Naive thymus-derived CD4-positive, alpha-beta T cell (primary cell): ENCODE measurements at regions of chr12 and their contacts with region 1.

Region 1: GRCh38 chr12:38316391-38317129 is at the start of gene ALG10B:
- DNase-seq: peak; percentile 86 to 96 (median 94)
- ATAC-seq: peak; percentile 99
- H3K4me3 ChIP-seq: peak within 1 kb of the TSS; percentile 95
- H3K4me3 Mint-ChIP-seq: peak within 1 kb of the TSS; percentile 92 to 98 (median 94)
- H3K27ac ChIP-seq: peak within 1 kb of the TSS; percentile 75
- H3K27ac Mint-ChIP-seq: peak within 1 kb of the TSS; percentile 96 to 99 (median 97)
- H3K4me1 ChIP-seq: peaks cover 0 to 13% of the 10 kb centered on the region in 2 donors
- H3K4me1 Mint-ChIP-seq: peaks cover 5 to 44% (median 35%) of the 10 kb centered on the region in 7 donors
- H3K27me3 ChIP-seq: no peaks in the 10 kb centered on the region
- H3K27me3 Mint-ChIP-seq: peaks cover 0 to 9% (median 0%) of the 10 kb centered on the region in 5 donors
- total RNA-seq, gene ALG10B: 10.5 to 17.1 (median 12.0) TPM

Region 2: DNA sequence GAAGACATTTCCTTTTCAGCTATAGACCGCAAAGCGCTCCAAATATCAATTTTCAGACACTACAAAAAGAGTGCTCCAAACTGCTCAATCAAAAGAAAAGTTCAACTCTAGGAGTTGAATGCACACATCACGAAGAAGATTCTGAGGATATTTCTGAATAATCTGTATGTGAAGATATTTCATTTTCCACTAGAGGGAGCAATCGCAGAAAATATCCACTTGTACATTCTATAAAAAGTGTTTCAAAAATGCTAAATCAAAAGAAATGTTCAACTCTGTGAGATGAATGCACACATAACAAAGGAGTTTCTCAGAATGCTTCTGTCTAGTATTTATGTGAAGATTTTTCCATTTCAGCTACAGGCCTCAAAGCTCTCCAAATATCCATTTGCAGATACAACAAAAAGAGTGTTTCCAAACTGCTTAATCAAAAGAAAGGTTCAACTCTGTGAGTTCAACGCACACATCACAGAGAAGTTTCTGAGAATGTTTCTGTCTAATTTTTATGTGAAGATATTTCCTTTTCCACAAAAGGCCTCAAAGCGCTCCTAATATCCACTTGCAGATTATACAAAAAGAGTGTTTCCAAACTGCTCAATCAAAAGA is 643.8 kb before region 1 on chr12:
- CTCF ChIA-PET with region 1: no interaction called
- POLR2A ChIA-PET with region 1: no interaction called
- intact Hi-C with region 1: loop called in 1 of 2 experiments (anchors 2 kb)
- DNase-seq: no peak
- ATAC-seq: no peak
- H3K4me3 ChIP-seq: no peak overlapping the region
- H3K4me3 Mint-ChIP-seq: no peak overlapping the region
- H3K27ac ChIP-seq: no peak overlapping the region
- H3K27ac Mint-ChIP-seq: no peak overlapping the region
- H3K4me1 ChIP-seq: no peaks in the 10 kb centered on the region
- H3K4me1 Mint-ChIP-seq: no peaks in the 10 kb centered on the region
- H3K27me3 ChIP-seq: no peaks in the 10 kb centered on the region
- H3K27me3 Mint-ChIP-seq: no peaks in the 10 kb centered on the region

Region 3: DNA sequence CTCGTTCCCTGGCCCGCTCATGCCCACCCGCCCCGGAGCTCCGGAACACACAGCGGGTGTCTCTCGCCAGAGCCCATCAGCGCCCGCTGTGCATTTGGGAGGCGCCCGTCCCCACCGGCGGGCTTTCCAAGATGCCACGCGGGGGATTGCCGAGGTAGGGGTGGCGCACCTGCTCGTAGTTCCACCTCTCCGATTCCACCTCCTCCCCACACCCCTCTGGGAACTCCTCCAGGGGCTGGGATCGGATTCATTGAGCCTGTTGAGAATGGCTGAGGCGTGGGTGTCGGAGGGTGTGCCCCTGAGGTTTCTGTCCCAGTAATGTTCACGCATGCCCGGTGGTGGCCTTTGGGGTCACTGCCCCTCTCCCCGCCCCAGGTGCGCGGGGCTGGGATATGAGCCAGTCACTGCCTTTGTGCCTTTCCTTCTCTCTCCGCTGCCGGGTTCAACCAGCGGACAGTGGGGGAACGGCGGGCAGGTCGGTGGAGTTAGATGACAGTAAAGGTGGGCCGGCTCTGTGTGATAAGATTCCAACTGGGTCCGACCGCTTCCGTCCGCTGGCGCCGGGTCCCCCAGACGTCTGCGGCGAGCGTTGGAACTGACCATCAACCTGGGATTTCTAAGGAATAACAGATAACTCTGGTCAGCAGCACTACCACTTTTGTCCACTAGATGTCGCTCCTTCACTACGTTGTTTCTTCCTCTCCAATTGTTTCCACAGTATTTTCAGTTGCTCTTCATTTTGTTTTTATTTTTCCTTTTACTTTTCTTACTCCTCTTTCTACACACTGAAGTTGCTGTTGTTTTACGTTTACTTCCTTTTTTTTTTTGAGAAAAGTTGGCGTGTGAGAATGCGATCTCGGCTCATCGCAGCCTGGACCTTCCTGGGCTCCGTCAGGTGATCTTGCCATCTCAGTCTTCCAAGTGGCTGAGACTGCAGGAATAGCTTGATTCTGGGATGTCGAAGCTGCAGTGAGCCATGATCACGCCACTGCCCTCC is 178.0 kb before region 1 on chr12:
- CTCF ChIA-PET with region 1: interaction called, 3 read pairs
- POLR2A ChIA-PET with region 1: no interaction called
- intact Hi-C with region 1: loop called (anchors 1 kb)
- DNase-seq: peak in 8 of 9 donors; percentile 26 to 65 (median 54)
- ATAC-seq: peak; percentile 74
- H3K4me3 ChIP-seq: peak overlapping the region; percentile 31
- H3K4me3 Mint-ChIP-seq: peak overlapping the region; percentile 45 to 89 (median 80)
- H3K27ac ChIP-seq: no peak overlapping the region
- H3K27ac Mint-ChIP-seq: peak overlapping the region in 4 of 9 donors; percentile 33 to 71 (median 53)
- H3K4me1 ChIP-seq: peaks cover 0 to 3% of the 10 kb centered on the region in 2 donors
- H3K4me1 Mint-ChIP-seq: peaks cover 0 to 13% (median 9%) of the 10 kb centered on the region in 7 donors
- H3K27me3 ChIP-seq: no peaks in the 10 kb centered on the region
- H3K27me3 Mint-ChIP-seq: peaks cover 0 to 29% (median 18%) of the 10 kb centered on the region in 5 donors

Region 4: GRCh38 chr12:38332814-38333213 is 16.3 kb after region 1 on chr12:
- CTCF ChIA-PET with region 1: no interaction called
- POLR2A ChIA-PET with region 1: no interaction called
- intact Hi-C with region 1: loop called in 1 of 2 experiments (anchors 1 kb)
- DNase-seq: no peak
- ATAC-seq: no peak
- H3K4me3 ChIP-seq: no peak overlapping the region
- H3K4me3 Mint-ChIP-seq: no peak overlapping the region
- H3K27ac ChIP-seq: no peak overlapping the region
- H3K27ac Mint-ChIP-seq: no peak overlapping the region
- H3K4me1 ChIP-seq: no peaks in the 10 kb centered on the region
- H3K4me1 Mint-ChIP-seq: peaks cover 0 to 4% (median 0%) of the 10 kb centered on the region in 7 donors
- H3K27me3 ChIP-seq: no peaks in the 10 kb centered on the region
- H3K27me3 Mint-ChIP-seq: no peaks in the 10 kb centered on the region

Region 5: DNA sequence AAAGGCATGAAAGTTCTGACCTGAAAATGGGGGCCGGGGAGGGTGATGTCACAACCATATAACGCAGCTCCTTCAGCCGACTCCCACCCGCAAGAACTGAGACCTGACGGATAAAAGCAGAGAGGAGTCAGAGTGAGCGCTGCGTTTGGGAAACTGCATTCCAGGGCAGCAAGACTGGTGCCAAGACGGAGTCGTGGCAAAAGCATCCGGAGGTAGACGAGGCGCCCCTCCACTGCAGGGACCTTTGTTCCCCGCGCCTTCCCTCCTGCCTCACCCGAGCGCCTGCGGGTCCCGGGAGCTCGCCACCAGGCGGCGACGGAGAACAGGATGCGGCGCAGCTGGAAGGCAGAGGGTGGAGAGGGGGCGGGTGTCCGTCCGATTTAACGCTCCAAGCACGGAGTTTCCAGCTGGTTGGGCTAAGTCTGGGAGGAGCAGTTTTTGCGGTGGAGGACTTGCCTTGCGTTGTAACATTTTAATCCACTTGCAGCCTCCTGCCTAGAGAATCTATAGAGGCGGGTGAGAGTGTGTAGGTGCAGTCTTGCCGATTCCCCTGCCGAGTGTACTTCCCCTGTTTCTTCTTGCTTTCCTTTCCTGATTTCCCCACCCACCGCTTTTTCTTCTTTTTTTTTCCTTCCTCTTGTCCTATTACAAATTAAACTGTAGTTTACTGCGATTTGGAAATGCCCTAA is 590.1 kb after region 1 on chr12:
- CTCF ChIA-PET with region 1: no interaction called
- POLR2A ChIA-PET with region 1: no interaction called
- intact Hi-C with region 1: loop called (anchors 1 to 2 kb)
- DNase-seq: peak; percentile 25 to 83 (median 49)
- ATAC-seq: peak; percentile 77
- H3K4me3 ChIP-seq: peak overlapping the region; percentile 76
- H3K4me3 Mint-ChIP-seq: peak overlapping the region; percentile 86 to 97 (median 92)
- H3K27ac ChIP-seq: no peak overlapping the region
- H3K27ac Mint-ChIP-seq: peak overlapping the region in 6 of 9 donors; percentile 38 to 95 (median 56)
- H3K4me1 ChIP-seq: no peaks in the 10 kb centered on the region
- H3K4me1 Mint-ChIP-seq: peaks cover 17 to 36% (median 25%) of the 10 kb centered on the region in 7 donors
- H3K27me3 ChIP-seq: no peaks in the 10 kb centered on the region
- H3K27me3 Mint-ChIP-seq: peaks cover 6 to 27% (median 21%) of the 10 kb centered on the region in 5 donors